Heart left ventricle (tissue), 16 donors: ENCODE measurements at regions of chrX and their contacts with region 1.

Region 1: GRCh38 chrX:109890895-109891502 is 111.9 kb upstream of the TMEM164 start:
- DNase-seq: peak; percentile 35 to 59 (median 42)
- ATAC-seq: peak in 3 of 4 donors; percentile 65 to 71 (median 70)
- H3K4me3 ChIP-seq: no peak overlapping the region
- H3K27ac ChIP-seq: no peak overlapping the region
- H3K4me1 ChIP-seq: peaks cover 0 to 36% (median 0%) of the 10 kb centered on the region in 12 donors
- H3K27me3 ChIP-seq: peaks cover 0 to 16% (median 0%) of the 10 kb centered on the region in 9 donors
- CTCF ChIP-seq: peak; percentile 59 to 94 (median 72)
- POLR2A ChIP-seq: no peak

Region 2: DNA sequence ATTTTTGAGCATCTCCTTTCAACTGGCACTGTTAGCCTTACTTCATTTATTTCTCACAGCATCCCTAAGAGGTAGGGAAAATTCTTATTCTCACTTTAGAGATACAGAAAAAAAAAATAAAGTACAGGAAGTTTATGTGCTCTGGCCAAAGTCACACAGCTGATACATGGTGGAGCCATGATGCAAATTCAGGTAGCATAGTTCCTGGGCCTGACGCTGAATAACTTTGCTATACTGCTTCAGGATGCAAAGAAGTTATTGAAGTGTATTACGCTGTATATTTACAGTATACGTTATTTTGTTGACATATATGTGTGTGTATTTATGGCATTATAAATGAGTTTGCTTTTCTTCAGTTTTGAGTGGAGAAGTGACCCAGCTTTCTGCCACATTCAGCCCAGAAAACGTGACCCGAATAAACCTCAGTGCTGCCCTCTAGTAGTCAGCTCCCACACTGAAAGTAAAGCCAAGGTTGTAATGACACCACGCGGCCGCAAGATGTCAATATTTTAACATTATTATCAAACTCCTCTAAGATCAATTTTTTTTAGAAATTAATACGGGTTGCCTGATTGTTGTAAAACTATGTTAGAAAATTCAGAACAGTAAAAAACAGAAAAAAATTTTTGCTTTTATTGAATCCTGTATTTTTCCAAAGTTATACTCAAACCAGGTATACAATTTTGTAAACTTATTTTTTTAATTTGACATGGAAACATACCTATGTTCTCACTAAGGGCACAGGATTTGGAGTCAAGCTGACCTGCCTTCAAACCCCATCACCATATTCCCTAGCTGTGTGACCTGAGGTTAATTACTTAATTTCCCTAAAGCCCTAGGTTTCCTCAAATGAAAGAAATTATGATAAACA is 405.3 kb before region 1 on chrX:
- intact Hi-C with region 1: loop called in 9 of 10 experiments (anchors 5 to 10 kb)
- DNase-seq: peak; percentile 31 to 64 (median 44)
- ATAC-seq: peak in 1 of 4 donors; percentile 50
- H3K4me3 ChIP-seq: no peak overlapping the region
- H3K27ac ChIP-seq: no peak overlapping the region
- H3K4me1 ChIP-seq: no peaks in the 10 kb centered on the region
- H3K27me3 ChIP-seq: peaks cover 0 to 38% (median 0%) of the 10 kb centered on the region in 9 donors
- CTCF ChIP-seq: peak; percentile 72 to 98 (median 88)
- POLR2A ChIP-seq: no peak

Region 3: GRCh38 chrX:109709129-109709631 is 181.8 kb before region 1 on chrX:
- intact Hi-C with region 1: loop called in 8 of 10 experiments (anchors 2 to 10 kb)
- DNase-seq: no peak
- ATAC-seq: peak in 3 of 4 donors; percentile 27 to 63 (median 40)
- H3K4me3 ChIP-seq: peak overlapping the region in 1 of 12 donors; percentile 5
- H3K27ac ChIP-seq: peak overlapping the region in 5 of 12 donors; percentile 23 to 81 (median 64)
- H3K4me1 ChIP-seq: peaks cover 0 to 75% (median 7%) of the 10 kb centered on the region in 12 donors
- H3K27me3 ChIP-seq: peaks cover 0 to 10% (median 0%) of the 10 kb centered on the region in 9 donors
- CTCF ChIP-seq: no peak
- POLR2A ChIP-seq: no peak

Region 4: GRCh38 chrX:109714340-109714958 is 176.6 kb before region 1 on chrX:
- intact Hi-C with region 1: loop called in 8 of 10 experiments (anchors 2 to 10 kb)
- DNase-seq: no peak
- ATAC-seq: no peak
- H3K4me3 ChIP-seq: no peak overlapping the region
- H3K27ac ChIP-seq: no peak overlapping the region
- H3K4me1 ChIP-seq: peaks cover 0 to 52% (median 11%) of the 10 kb centered on the region in 12 donors
- H3K27me3 ChIP-seq: peaks cover 0 to 10% (median 0%) of the 10 kb centered on the region in 9 donors
- CTCF ChIP-seq: no peak
- POLR2A ChIP-seq: no peak